IMR-90 (cell line): ENCODE measurements at regions of chr1 and their contacts with region 1.

Region 1: DNA sequence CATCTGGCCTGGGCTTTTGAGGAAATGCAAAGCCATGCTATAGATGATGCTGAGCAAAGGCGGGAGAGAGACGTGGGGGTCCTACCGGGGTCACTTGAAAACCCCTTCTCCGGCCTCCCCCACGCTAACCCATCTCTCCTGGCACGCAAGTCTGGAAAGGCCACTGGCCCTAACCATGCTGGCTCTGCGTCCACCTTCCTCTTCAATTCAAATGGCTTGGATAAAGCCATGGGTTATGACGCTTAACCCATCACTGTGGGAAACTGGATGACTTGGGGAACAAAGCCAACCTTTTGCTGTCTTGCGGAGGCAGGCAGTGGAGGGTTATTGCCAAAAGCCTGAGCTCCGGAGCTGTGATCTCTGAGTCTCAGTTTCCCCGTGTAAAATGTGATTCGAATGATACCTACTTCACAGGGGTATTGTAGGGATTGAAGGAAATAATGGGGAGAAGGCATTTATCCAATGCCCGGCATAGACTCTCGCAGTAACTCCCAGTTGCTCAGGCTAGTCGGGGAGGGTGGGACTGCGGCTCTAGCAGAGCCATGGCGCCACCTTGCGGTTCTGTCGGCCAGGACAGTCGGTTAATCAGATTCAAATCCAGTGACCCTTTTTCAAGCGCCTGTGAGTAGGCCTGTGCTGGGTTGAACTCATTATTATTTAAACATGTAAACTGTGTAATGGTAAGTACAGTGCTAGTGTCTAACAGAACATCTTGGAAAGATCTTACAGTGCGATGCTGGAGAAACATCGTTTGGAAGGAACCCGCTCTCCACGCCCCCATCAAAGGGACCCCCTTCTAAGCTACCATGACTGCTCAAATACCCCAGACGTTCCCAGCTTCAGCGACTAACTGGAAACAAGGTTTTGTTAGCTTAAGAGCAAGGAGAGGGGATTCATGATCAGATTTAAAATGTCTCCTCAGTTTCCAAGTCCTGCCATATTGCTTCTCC is 20.3 kb downstream of the NEK2 start:
- DNase-seq: peak; percentile 84
- ATAC-seq: peak; percentile 98
- H3K4me3 ChIP-seq: no peak overlapping the region
- H3K27ac ChIP-seq: no peak overlapping the region
- H3K4me1 ChIP-seq: peaks cover 8% of the 10 kb centered on the region
- H3K27me3 ChIP-seq: no peaks in the 10 kb centered on the region
- CTCF ChIP-seq: peak; percentile 99
- POLR2A ChIP-seq: peak; percentile 61; the same call in 1 of the 2 replicates
- RAD21 ChIP-seq: peak; percentile 100

Region 2: GRCh38 chr1:211469938-211470529 is 185.1 kb before region 1 on chr1:
- CTCF ChIA-PET with region 1: no interaction called
- POLR2A ChIA-PET with region 1: no interaction called
- dilution Hi-C with region 1: no loop called
- in situ Hi-C with region 1: no loop called
- intact Hi-C with region 1: loop called (anchors 1 kb)
- DNase-seq: peak; percentile 64
- ATAC-seq: peak; percentile 100
- H3K4me3 ChIP-seq: no peak overlapping the region
- H3K27ac ChIP-seq: no peak overlapping the region
- H3K4me1 ChIP-seq: no peaks in the 10 kb centered on the region
- H3K27me3 ChIP-seq: peaks cover 17% of the 10 kb centered on the region
- CTCF ChIP-seq: peak; percentile 81
- POLR2A ChIP-seq: no peak
- RAD21 ChIP-seq: peak; percentile 61

Region 3: GRCh38 chr1:211520641-211521040 is 134.5 kb before region 1 on chr1:
- CTCF ChIA-PET with region 1: interaction called, 6 read pairs
- POLR2A ChIA-PET with region 1: no interaction called
- dilution Hi-C with region 1: no loop called
- in situ Hi-C with region 1: loop called (anchors 5 kb)
- intact Hi-C with region 1: loop called (anchors 1 kb)
- DNase-seq: no peak
- ATAC-seq: no peak
- H3K4me3 ChIP-seq: no peak overlapping the region
- H3K27ac ChIP-seq: no peak overlapping the region
- H3K4me1 ChIP-seq: peaks cover 2% of the 10 kb centered on the region; the same call in 1 of the 2 replicates
- H3K27me3 ChIP-seq: no peaks in the 10 kb centered on the region
- CTCF ChIP-seq: no peak; the same call in 1 of the 2 replicates
- POLR2A ChIP-seq: no peak
- RAD21 ChIP-seq: no peak

Region 4: DNA sequence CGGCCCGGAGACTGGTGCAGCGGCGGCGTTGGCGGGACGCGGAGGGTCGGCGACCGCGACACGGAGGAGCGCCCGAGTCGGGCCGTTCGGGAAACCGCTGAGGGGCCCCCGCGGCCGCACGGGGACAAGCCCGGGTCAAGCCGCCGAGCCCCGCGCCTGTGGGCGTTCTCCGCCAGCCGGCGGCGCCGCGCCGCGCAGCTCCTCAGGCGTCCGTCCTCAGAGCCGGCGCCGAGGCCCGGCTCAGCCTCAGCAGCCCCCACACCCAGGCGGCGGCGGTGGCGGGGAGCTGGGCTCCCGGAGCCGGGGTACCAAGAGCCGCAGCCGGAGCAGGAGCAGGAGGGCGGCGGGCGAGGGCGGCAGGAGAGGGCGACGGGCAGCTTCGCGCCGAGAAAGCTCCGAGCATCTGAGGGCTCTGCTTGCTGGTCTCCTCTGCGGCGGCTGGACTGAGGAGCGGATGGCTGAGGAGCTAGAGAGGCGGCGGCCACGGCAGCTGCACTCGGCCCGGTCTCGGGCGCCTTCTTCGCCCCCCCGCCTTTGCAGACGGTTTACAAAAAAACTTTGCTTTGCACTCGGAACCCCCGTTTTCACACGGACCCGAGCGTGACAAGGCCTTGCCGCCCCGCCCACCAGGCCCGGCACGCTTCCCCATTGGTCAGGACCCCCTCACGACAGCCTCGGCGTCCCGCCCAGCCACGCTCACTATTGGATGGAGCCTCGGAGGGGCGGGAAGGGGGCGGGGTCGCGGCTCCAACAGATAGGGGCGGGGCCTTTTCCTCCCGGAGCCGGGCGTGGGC is 76.3 kb before region 1 on chr1 and contains the start of gene SLC30A1:
- CTCF ChIA-PET with region 1: interaction called, 3 read pairs
- POLR2A ChIA-PET with region 1: no interaction called
- dilution Hi-C with region 1: no loop called
- in situ Hi-C with region 1: loop called (anchors 5 kb)
- intact Hi-C with region 1: loop called (anchors 1 kb)
- DNase-seq: peak; percentile 97
- ATAC-seq: peak; percentile 93
- H3K4me3 ChIP-seq: peak within 1 kb of the TSS; percentile 96
- H3K27ac ChIP-seq: peak within 1 kb of the TSS; percentile 91
- H3K4me1 ChIP-seq: peaks cover 13% of the 10 kb centered on the region
- H3K27me3 ChIP-seq: no peaks in the 10 kb centered on the region
- CTCF ChIP-seq: 0 out of 2 replicates have a peak, but pooled peaks have one; percentile 13
- POLR2A ChIP-seq: peak; percentile 74
- RAD21 ChIP-seq: no peak
- total RNA-seq, gene SLC30A1: 8.4 and 17.8 TPM in 2 replicates

Region 5: GRCh38 chr1:211613093-211613947 is 41.8 kb before region 1 on chr1:
- CTCF ChIA-PET with region 1: no interaction called
- POLR2A ChIA-PET with region 1: no interaction called
- dilution Hi-C with region 1: no loop called
- in situ Hi-C with region 1: no loop called
- intact Hi-C with region 1: no loop called
- DNase-seq: peak; percentile 94
- ATAC-seq: peak; percentile 99
- H3K4me3 ChIP-seq: no peak overlapping the region
- H3K27ac ChIP-seq: peak overlapping the region; percentile 85
- H3K4me1 ChIP-seq: peaks cover 9% of the 10 kb centered on the region
- H3K27me3 ChIP-seq: no peaks in the 10 kb centered on the region
- CTCF ChIP-seq: no peak
- POLR2A ChIP-seq: no peak
- RAD21 ChIP-seq: peak; percentile 8; the same call in 1 of the 2 replicates

Region 6: GRCh38 chr1:211643324-211644212 is 11.5 kb before region 1 on chr1:
- CTCF ChIA-PET with region 1: no interaction called
- POLR2A ChIA-PET with region 1: no interaction called
- dilution Hi-C with region 1: no loop called
- in situ Hi-C with region 1: no loop called
- intact Hi-C with region 1: no loop called
- DNase-seq: no peak
- ATAC-seq: no peak
- H3K4me3 ChIP-seq: no peak overlapping the region
- H3K27ac ChIP-seq: no peak overlapping the region
- H3K4me1 ChIP-seq: peaks cover 12% of the 10 kb centered on the region
- H3K27me3 ChIP-seq: no peaks in the 10 kb centered on the region
- CTCF ChIP-seq: no peak
- POLR2A ChIP-seq: no peak
- RAD21 ChIP-seq: no peak